ENCODE measurements at regions of chr16 and their contacts with region 1.

Region 1: GRCh38 chr16:47970291-47970931 is 185.4 kb downstream of the ABCC12 start:
- DNase-seq: no peak
- CTCF ChIP-seq: no peak

Region 2: GRCh38 chr16:48022496-48022895 is 52.1 kb after region 1 on chr16:
- in situ Hi-C with region 1: no loop called
- DNase-seq: peak; percentile 37
- CTCF ChIP-seq: no peak

Region 3: GRCh38 chr16:48041861-48042480 is 71.6 kb after region 1 on chr16:
- in situ Hi-C with region 1: no loop called
- DNase-seq: no peak
- CTCF ChIP-seq: peak; percentile 5

Region 4: GRCh38 chr16:48081656-48082055 is 111.2 kb after region 1 on chr16:
- in situ Hi-C with region 1: loop called (anchors 25 kb)
- DNase-seq: no peak
- CTCF ChIP-seq: no peak

Measured in GM13977 (cell line).